ENCODE measurements at regions of chr2 and their contacts with region 1.

Region 1: DNA sequence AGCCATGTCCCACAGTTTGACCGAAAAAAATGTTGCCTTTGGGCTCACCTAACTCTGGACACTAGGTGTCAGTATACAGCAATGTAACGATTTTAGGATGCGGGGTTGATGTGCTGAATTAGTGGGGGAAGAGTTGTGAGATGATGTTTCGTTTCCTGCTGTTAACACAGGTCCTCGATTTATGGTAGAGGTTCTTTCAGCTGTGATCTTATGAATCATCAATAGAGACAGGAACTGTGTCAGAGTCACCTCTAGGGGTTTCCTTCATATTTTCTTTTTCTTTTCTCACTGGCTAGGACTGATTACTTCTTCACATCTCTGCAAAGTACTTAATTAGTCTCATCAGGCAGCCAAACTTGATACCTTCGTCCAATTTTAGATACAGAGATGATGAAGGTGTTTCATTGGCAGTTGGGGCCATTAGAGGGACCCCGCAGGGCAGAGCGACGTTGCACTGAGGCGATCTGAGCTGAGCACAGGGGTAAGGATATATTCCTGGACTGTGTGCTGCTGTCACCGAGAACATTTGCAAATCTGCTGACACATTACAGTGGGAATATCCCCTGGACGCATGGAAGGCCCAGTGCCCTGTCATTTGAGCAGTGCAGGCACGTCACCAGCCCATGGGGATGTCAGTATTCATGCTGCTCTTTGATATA is 10.2 kb upstream of the MMADHC start:
- DNase-seq: no peak
- ATAC-seq: peak; percentile 88

Region 2: DNA sequence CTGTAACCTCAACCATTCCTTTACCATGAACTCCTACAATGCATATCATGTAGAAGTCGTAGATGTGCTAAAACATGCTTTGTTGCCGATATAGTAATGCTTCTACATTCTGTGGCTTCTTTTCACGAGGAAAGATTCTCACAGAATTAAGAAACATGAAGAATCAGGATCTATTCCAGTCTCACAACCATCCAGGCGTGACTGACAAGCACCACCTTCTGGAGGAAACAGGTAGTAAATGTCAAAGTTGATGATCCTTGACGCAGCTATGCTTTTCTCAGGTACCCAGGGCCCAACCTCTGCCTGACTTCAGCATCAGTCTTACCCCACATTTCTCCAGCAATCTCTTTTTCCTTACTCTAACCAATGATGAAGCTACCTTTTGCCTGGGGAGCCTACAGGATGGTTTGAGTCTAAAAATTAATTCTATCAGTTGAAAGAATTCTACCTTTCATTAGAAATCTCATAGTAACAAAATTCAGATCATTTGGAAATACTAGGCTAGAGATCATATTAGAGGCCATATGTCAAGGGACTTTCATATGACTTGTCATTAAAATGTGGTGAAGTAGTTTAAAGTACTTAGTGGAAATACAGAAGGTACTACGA is 1013.0 kb after region 1 on chr2:
- intact Hi-C with region 1: loop called (anchors 5 kb)
- DNase-seq: no peak
- ATAC-seq: no peak

Region 3: DNA sequence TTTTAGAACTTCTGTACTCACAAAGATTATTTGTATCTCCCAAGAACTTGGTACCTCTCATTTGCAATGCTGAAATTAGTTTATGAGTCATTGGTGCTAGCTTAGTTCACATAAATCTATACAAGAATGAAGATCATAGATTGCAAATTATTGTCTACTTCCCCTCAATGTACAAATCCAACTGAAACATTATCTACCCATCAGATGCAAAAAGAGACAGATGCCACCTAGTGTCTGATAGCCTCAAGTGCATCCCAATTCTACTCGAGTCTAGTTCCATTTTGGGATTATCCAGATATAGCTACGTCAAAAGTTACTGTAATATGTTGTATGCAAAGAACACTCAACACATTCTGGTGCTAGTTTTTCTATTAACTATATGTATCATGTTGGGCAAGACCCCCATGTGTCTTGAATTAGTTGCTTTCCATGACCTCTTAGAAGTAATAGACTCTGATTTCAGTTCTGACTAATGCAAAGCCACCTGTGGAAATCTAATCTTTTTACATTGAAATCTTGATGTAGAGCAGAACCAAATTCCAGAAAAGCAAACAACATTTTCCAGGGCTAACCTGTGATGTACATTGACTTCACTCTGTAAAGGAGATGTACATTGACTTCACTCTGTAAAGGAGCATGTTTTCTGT is 1453.9 kb after region 1 on chr2:
- intact Hi-C with region 1: loop called (anchors 5 kb)
- DNase-seq: no peak
- ATAC-seq: peak; percentile 34

Region 4: GRCh38 chr2:151238527-151239487 is 1641.0 kb after region 1 on chr2:
- intact Hi-C with region 1: loop called (anchors 1 kb)
- DNase-seq: no peak
- ATAC-seq: peak; percentile 80

Measured in Right ventricle myocardium inferior (tissue), 1 donor.